BJ (cell line): ENCODE measurements at regions of chr17 and their contacts with region 1.

Region 1: GRCh38 chr17:12744298-12744697 is 45.0 kb upstream of the ARHGAP44 start:
- DNase-seq: no peak
- H3K4me3 ChIP-seq: no peak overlapping the region
- H3K27me3 ChIP-seq: no peaks in the 10 kb centered on the region
- CTCF ChIP-seq: no peak

Region 2: GRCh38 chr17:12180644-12181261 is 563.5 kb before region 1 on chr17:
- CTCF ChIA-PET with region 1: interaction called, 17 read pairs
- POLR2A ChIA-PET with region 1: no interaction called
- DNase-seq: no peak
- H3K4me3 ChIP-seq: no peak overlapping the region
- H3K27me3 ChIP-seq: no peaks in the 10 kb centered on the region
- CTCF ChIP-seq: peak; percentile 69

Region 3: GRCh38 chr17:12256380-12256995 is 487.8 kb before region 1 on chr17:
- CTCF ChIA-PET with region 1: interaction called, 12 read pairs
- POLR2A ChIA-PET with region 1: no interaction called
- DNase-seq: peak; percentile 10
- H3K4me3 ChIP-seq: no peak overlapping the region
- H3K27me3 ChIP-seq: no peaks in the 10 kb centered on the region; the same call in 1 of the 2 replicates
- CTCF ChIP-seq: peak; percentile 69

Region 4: DNA sequence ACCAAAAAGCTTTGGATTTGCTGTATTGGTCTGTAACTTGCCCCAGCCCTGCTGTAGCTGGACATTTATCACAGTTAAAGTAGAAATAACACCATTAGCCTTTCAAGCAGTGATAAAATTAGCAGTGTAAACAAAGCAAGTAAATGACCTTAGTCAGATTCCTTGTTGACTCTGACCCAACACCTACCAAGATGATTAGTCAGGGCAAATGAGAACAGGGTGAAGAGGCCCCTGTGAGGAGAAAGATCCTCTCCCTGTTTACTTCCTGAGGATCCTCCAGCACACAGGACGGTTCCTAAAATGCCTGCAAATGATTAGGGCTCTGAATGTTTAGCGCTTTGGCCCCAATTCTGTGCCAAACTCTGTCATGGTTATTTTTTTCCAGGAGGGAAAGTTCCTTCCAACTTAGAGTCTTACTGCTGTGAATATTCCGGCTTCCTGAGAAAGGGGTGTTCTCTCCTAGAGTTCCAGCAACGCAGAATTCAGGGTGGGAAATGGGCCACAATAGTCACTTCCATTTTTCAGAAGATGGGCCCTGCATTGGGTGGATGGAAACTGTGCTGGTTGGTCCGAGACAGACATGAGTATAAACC is 337.6 kb before region 1 on chr17:
- CTCF ChIA-PET with region 1: no interaction called
- POLR2A ChIA-PET with region 1: no interaction called
- DNase-seq: no peak
- H3K4me3 ChIP-seq: no peak overlapping the region
- H3K27me3 ChIP-seq: no peaks in the 10 kb centered on the region
- CTCF ChIP-seq: no peak

Region 5: GRCh38 chr17:12656354-12656753 is 87.9 kb before region 1 on chr17:
- CTCF ChIA-PET with region 1: no interaction called
- POLR2A ChIA-PET with region 1: no interaction called
- DNase-seq: no peak
- H3K4me3 ChIP-seq: no peak overlapping the region
- H3K27me3 ChIP-seq: no peaks in the 10 kb centered on the region
- CTCF ChIP-seq: no peak

Region 6: DNA sequence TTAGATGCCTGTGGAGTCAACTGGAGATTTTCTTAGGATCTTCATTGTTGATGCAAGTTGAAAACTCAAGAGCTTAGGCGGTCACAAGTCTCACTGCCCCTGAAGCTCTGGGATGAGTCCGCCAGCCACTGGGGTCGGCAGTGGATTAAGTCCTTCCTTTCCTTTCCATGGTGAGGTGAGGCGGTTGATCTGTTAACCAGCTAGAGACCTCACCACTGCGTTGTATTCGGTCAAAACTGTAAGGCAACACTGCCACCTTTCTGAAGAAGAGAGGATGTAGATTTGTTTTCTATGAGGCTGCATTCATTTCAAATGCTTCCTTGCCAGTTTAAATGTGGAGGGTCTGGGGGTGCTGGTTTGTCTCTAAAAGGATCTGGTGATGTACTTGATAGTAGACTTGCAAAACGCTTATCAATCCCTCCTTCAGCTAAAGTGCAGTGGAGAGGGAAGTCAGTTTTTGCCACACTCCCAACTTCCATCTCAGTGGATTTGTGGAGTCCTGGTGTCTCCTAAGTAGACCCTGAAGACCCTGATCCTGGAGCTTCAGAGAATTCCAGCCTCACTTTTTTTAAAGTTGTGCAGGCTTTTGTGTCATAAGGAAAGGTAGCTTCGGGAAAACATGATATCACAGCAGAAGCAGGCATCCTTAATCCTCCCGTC is 76.9 kb before region 1 on chr17:
- CTCF ChIA-PET with region 1: interaction called, 19 read pairs
- POLR2A ChIA-PET with region 1: no interaction called
- DNase-seq: no peak
- H3K4me3 ChIP-seq: peak overlapping the region; percentile 17; the same call in 1 of the 2 replicates
- H3K27me3 ChIP-seq: no peaks in the 10 kb centered on the region
- CTCF ChIP-seq: peak; percentile 55

Region 7: DNA sequence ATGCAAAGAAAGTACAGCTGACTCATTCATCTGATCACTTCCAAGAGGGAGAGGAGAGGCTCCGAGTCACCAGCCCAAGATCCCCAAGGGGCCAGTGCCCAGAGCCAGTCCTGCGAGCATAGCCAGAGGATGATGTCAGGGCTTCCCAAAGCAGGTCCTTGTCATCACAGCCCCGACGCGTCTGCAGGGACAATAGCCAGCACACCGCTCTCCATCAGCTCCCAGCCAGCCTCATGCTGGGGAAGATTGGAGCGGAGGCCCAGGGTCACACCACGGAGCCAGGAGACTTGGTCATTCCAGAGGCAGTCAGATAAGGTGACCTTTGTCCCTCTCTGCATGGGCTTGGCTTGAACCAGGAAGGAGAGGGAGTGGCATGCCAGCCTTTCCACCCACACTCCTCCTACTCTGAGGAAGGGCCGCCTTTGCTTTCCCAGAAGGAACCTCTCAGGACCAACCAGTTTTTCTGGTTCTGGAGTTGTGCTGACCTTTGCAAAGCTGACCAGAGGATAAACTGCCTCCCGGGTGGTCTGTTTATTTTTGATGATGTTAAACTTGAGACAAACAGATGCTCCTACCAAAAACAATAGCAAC is 13.3 kb before region 1 on chr17:
- CTCF ChIA-PET with region 1: interaction called, 10 read pairs
- POLR2A ChIA-PET with region 1: no interaction called
- DNase-seq: no peak
- H3K4me3 ChIP-seq: no peak overlapping the region
- H3K27me3 ChIP-seq: no peaks in the 10 kb centered on the region
- CTCF ChIP-seq: no peak

Region 8: GRCh38 chr17:12830777-12831247 is 86.5 kb after region 1 on chr17:
- CTCF ChIA-PET with region 1: no interaction called
- POLR2A ChIA-PET with region 1: no interaction called
- DNase-seq: no peak
- H3K4me3 ChIP-seq: no peak overlapping the region
- H3K27me3 ChIP-seq: no peaks in the 10 kb centered on the region
- CTCF ChIP-seq: no peak

Region 9: DNA sequence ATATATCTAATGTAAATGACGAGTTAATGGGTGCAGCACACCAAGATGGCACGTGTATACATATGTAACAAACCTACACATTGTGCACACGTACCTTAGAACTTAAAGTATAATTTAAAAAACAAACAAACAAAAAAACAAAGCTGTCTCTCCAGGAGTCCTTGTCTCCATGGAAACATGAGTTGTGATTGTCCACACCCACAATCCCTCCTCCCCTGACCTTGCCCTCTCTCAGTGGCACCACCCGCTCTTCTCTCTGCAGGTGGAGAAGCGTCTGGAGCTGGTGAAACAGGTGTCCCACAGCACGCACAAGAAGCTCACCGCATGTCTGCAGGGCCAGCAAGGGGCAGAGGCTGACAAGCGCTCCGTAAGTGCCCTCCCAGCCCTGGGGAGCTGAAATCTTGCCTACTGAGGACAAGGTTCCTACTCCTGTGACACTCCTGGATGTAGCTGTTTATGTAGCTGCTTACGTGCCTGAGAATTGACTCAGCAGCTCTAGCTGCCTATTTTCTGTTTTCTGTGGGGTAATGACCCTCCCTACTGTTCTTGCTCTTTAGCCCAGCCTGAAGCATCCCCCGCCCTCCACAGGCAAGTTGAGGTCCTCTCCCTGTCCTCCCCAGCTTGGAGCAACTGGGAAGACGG is 152.0 kb after region 1 on chr17:
- CTCF ChIA-PET with region 1: no interaction called
- POLR2A ChIA-PET with region 1: no interaction called
- DNase-seq: no peak
- H3K4me3 ChIP-seq: no peak overlapping the region
- H3K27me3 ChIP-seq: no peaks in the 10 kb centered on the region
- CTCF ChIP-seq: no peak